Transverse colon (tissue), 4 donors: ENCODE measurements at regions of chr3 and their contacts with region 1.

Region 1: GRCh38 chr3:109973733-109974132 is 636.4 kb upstream of the DPPA4 start:
- DNase-seq: no peak
- H3K4me3 ChIP-seq: no peak overlapping the region
- H3K27ac ChIP-seq: no peak overlapping the region
- H3K4me1 ChIP-seq: no peaks in the 10 kb centered on the region
- H3K27me3 ChIP-seq: no peaks in the 10 kb centered on the region
- CTCF ChIP-seq: no peak
- EP300 ChIP-seq: no peak
- POLR2A ChIP-seq: no peak

Region 2: DNA sequence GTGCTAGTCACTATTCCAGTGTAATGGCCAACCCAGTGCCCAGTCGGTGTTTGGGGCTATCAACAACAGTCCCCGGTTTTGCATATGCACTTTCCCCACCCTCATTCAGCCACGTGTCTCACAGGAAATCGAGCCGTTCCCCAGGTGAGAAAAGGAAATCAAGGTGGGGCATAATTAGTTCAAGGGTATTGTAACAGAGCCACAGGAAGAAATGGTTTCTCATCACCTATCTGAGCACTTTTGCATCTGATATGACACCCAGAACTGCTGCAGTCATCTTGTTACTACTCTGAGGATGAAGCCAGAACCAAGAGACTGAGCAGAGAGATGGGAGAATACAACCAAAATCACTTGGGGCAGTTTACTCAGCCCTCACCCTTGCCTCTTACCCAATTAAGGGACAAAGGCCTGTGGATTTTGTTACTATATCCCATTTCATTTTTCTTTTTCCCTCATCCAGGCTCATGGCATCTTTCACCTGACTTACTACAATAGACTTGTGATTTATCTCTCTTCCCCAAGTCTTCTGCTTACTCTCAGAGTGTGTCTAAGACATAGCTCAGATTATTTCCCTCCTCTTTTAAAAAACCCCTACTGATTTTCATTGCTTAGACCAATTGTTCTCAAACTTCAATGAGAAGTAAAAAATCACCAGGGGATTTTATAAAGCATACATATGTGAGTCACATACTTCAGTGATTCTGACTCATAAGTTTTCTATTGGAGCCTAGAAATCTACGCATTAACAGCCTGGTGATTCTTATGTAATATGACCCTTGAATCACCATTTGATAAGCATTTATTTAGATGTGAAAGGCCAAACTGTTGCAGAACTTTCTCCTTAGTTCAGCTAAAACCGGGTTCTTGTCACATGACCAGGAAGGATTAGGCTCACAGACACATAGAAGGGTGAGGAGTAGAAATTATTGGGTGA is 1110.6 kb before region 1 on chr3:
- in situ Hi-C with region 1: no loop called
- intact Hi-C with region 1: no loop called
- DNase-seq: no peak
- H3K4me3 ChIP-seq: no peak overlapping the region
- H3K27ac ChIP-seq: no peak overlapping the region
- H3K4me1 ChIP-seq: no peaks in the 10 kb centered on the region
- H3K27me3 ChIP-seq: no peaks in the 10 kb centered on the region
- CTCF ChIP-seq: no peak
- EP300 ChIP-seq: no peak
- POLR2A ChIP-seq: no peak

Region 3: GRCh38 chr3:110479731-110480130 is 506.0 kb after region 1 on chr3:
- in situ Hi-C with region 1: no loop called
- intact Hi-C with region 1: loop called (anchors 5 kb)
- DNase-seq: no peak
- H3K4me3 ChIP-seq: no peak overlapping the region
- H3K27ac ChIP-seq: no peak overlapping the region
- H3K4me1 ChIP-seq: no peaks in the 10 kb centered on the region
- H3K27me3 ChIP-seq: no peaks in the 10 kb centered on the region
- CTCF ChIP-seq: no peak
- EP300 ChIP-seq: no peak
- POLR2A ChIP-seq: no peak